PC-3 (cell line): ENCODE measurements at regions of chr6 and their contacts with region 1.

Region 1: GRCh38 chr6:102736941-102737368 is 1343.4 kb downstream of the GRIK2 start:
- DNase-seq: peak; percentile 86
- ATAC-seq: peak; percentile 95
- H3K4me3 ChIP-seq: peak overlapping the region; percentile 36; the same call in 1 of the 2 replicates
- H3K27ac ChIP-seq: peak overlapping the region; percentile 84
- H3K4me1 ChIP-seq: peaks cover 39% of the 10 kb centered on the region
- H3K27me3 ChIP-seq: no peaks in the 10 kb centered on the region
- CTCF ChIP-seq: no peak

Region 2: DNA sequence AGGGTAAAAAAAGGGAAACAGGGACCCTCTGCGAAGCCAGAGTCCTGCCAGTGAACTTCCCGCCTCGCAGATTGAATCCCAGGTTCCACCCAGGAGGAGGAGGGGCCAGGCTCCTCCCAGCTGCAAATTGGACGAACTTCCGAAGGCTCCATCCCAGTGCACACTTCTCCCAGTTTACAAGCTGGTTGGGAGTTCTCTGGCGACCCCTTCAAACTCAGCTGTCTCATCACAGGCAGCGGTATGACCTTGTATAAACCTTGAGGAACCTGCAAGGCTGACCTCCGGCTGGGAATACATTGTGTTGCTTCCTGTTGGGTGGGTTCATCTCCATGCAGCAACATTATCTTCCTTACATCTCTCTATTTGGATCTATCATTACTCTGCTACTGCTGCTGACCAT is 380.8 kb before region 1 on chr6:
- CTCF ChIA-PET with region 1: no interaction called
- POLR2A ChIA-PET with region 1: no interaction called
- intact Hi-C with region 1: no loop called
- DNase-seq: no peak
- ATAC-seq: no peak
- H3K4me3 ChIP-seq: no peak overlapping the region
- H3K27ac ChIP-seq: no peak overlapping the region
- H3K4me1 ChIP-seq: no peaks in the 10 kb centered on the region
- H3K27me3 ChIP-seq: no peaks in the 10 kb centered on the region
- CTCF ChIP-seq: no peak

Region 3: GRCh38 chr6:102641426-102641825 is 95.5 kb before region 1 on chr6:
- CTCF ChIA-PET with region 1: no interaction called
- POLR2A ChIA-PET with region 1: no interaction called
- intact Hi-C with region 1: no loop called
- DNase-seq: no peak
- ATAC-seq: no peak
- H3K4me3 ChIP-seq: no peak overlapping the region
- H3K27ac ChIP-seq: no peak overlapping the region
- H3K4me1 ChIP-seq: no peaks in the 10 kb centered on the region
- H3K27me3 ChIP-seq: no peaks in the 10 kb centered on the region
- CTCF ChIP-seq: no peak

Region 4: DNA sequence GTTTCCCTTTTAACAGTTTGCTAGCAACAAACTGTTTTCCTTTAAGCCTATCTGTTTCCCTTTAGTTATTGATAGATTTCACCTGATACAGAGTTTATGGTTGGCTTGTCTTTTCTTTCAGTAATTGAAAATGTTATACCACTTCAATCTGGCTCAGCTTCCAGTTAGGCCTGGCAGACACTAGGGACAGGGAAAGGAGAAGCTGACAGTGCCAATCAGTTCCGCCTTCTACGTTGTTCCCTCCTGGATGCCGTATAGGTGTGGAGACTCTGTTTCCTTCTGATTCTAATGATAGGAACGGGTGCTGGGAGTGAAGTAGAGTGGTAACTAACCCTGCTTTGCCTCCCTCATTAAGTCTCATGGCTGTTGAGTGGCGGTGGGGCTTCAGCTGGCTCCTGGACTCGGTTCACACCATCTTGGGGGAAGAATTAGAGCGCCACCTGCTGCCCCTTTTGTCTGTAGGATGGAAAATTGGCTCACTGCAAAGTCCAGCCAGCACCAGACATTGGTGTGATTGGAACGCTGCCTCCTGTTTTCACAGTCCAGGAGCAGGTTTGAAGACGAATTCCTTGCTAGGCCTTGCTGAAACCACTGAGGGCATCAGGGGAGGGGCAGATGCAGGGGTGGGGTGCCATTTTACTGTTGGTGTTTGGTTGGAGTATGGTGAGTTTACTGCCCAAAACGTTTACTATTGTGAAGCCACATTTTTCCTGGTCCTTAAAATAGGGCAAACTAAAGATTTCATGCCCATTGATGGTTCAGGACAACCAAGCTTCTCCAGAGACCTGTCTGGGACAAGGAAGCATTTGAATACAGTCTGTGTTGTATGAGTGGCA is 386.0 kb after region 1 on chr6:
- CTCF ChIA-PET with region 1: interaction called, 10 read pairs
- POLR2A ChIA-PET with region 1: no interaction called
- intact Hi-C with region 1: no loop called
- DNase-seq: peak; percentile 62
- ATAC-seq: peak; percentile 80
- H3K4me3 ChIP-seq: no peak overlapping the region
- H3K27ac ChIP-seq: no peak overlapping the region
- H3K4me1 ChIP-seq: no peaks in the 10 kb centered on the region
- H3K27me3 ChIP-seq: no peaks in the 10 kb centered on the region
- CTCF ChIP-seq: peak; percentile 76